ENCODE measurements at regions of chr4 and their contacts with region 1.

Region 1: GRCh38 chr4:92433272-92433758 is 129.5 kb downstream of the GRID2 start:
- DNase-seq: peak in 1 of 2 experiments; percentile 47
- H3K4me3 ChIP-seq: peak overlapping the region in 1 of 4 experiments; percentile 14; a peak in 1 of 8 replicates
- H3K27ac ChIP-seq: peak overlapping the region; percentile 86
- H3K4me1 ChIP-seq: peaks cover 14 to 31% (median 21%) of the 10 kb centered on the region in 4 experiments
- H3K27me3 ChIP-seq: no peaks in the 10 kb centered on the region
- CTCF ChIP-seq: no peak
- EP300 ChIP-seq: peak in 1 of 2 experiments; percentile 62; a peak in 1 of 3 replicates
- POLR2A ChIP-seq: peak; percentile 32 to 37; a peak in 2 of 3 replicates
- RAD21 ChIP-seq: no peak

Region 2: GRCh38 chr4:92421920-92422319 is 11.4 kb before region 1 on chr4:
- CTCF ChIA-PET with region 1: interaction called, 4 read pairs
- POLR2A ChIA-PET with region 1: interaction called, 35 read pairs
- DNase-seq: no peak
- H3K4me3 ChIP-seq: no peak overlapping the region
- H3K27ac ChIP-seq: no peak overlapping the region
- H3K4me1 ChIP-seq: peaks cover 0 to 11% (median 6%) of the 10 kb centered on the region in 4 experiments; a peak in 5 of 7 replicates
- H3K27me3 ChIP-seq: no peaks in the 10 kb centered on the region
- CTCF ChIP-seq: no peak
- EP300 ChIP-seq: no peak
- POLR2A ChIP-seq: no peak
- RAD21 ChIP-seq: no peak

Region 3: GRCh38 chr4:92447255-92447905 is 14.1 kb after region 1 on chr4:
- CTCF ChIA-PET with region 1: no interaction called
- POLR2A ChIA-PET with region 1: interaction called, 26 read pairs
- DNase-seq: no peak
- H3K4me3 ChIP-seq: peak overlapping the region in 1 of 4 experiments; percentile 66; a peak in 2 of 8 replicates
- H3K27ac ChIP-seq: no peak overlapping the region
- H3K4me1 ChIP-seq: peaks cover 0 to 36% (median 13%) of the 10 kb centered on the region in 4 experiments; a peak in 6 of 7 replicates
- H3K27me3 ChIP-seq: no peaks in the 10 kb centered on the region
- CTCF ChIP-seq: no peak
- EP300 ChIP-seq: no peak
- POLR2A ChIP-seq: no peak
- RAD21 ChIP-seq: no peak

Measured in H1 (cell line).